ENCODE measurements at regions of chr2 and their contacts with region 1.

Region 1: DNA sequence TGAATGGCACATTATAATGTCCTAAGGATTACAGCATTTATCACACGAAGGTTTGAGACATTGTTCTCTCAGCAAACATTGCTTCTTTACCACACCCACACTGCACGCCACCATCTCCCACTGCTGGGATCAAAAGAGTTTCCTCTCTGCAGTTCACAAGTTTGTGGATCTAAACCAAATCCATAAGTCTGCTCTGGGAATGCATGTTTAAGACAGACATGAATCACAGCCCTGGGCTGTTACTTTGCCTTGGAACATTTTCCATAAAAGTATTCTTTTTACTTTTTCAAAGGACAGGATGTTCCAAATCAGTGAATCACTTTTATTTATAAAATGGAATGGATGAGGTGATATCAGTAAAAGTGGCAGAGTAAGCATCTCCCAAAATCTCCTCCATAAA is 36.1 kb downstream of the STPG4 start:
- DNase-seq: peak; percentile 78
- ATAC-seq: peak; percentile 79
- H3K4me3 ChIP-seq: no peak overlapping the region
- H3K27ac ChIP-seq: peak overlapping the region; percentile 65
- H3K4me1 ChIP-seq: peaks cover 34% of the 10 kb centered on the region
- H3K27me3 ChIP-seq: no peaks in the 10 kb centered on the region
- CTCF ChIP-seq: no peak

Region 2: DNA sequence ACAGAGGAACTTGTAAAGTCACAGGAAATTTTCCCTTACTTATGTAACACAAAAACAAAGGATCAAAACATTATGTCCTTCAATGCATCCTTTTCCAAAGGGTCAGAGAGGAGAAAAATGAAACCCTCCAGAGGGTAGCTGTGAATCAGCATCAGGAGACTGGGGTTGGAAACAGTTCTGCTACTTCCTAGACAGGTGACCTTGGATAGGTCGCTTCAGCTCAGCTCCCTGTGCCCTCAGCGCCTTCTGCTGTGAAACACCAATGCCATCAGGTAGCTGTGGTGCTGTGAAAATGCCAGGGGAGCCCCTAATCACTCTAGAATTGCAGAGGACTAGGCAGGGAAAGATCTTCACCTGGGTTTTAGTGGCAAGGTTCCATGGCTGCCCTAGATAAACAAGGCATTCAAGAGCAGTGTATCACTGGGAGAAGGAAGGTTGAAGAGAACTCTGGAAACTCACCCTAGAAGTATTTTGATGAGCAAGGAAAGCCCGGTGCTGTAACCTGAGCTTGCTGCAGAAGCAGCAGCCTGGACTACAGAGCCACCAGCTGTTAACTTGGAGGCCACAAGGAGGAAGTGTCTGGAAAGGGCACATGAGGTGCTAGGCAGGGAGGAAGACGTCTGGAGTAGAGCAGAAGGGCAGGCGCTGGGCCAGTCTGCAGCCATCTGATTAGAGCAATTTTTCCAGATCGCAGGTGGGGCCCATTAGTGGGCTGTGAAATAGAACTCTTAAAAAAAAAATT is 102.7 kb before region 1 on chr2:
- CTCF ChIA-PET with region 1: no interaction called
- POLR2A ChIA-PET with region 1: no interaction called
- intact Hi-C with region 1: loop called (anchors 1 kb)
- DNase-seq: peak; percentile 95
- ATAC-seq: peak; percentile 97
- H3K4me3 ChIP-seq: no peak overlapping the region
- H3K27ac ChIP-seq: peak overlapping the region; percentile 61
- H3K4me1 ChIP-seq: peaks cover 27% of the 10 kb centered on the region
- H3K27me3 ChIP-seq: no peaks in the 10 kb centered on the region
- CTCF ChIP-seq: peak; percentile 46